Right lobe of liver (tissue), 6 donors: ENCODE measurements at regions of chr18 and their contacts with region 1.

Region 1: DNA sequence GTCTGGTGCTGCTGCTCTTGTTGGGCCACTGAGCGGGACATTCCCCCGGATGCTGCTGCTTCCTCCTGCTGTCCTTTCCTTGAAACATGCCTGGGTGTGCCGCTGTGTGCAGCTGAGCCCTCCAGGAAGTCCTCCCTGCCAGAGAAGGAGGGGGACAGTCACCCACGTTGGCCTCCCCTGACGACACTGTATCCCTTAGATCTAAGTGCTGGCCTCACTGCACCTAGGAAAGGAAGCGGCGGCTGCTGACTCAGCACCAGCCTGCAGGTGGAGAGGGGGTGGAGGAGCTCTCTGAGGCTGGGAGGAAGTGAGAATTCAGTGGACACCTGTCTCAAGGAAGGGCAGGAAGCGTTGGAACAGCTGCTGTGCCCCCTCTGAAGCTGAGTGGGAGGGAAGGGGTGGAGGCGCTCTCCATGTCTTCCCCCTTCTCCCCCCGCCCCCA is 239.8 kb downstream of the HAUS1 start:
- DNase-seq: peak in 2 of 3 donors; percentile 44 to 70
- ATAC-seq: peak; percentile 62 to 71 (median 66)
- H3K4me3 ChIP-seq: peak overlapping the region in 1 of 3 donors; percentile 21
- H3K27ac ChIP-seq: peak overlapping the region in 1 of 3 donors; percentile 59
- H3K4me1 ChIP-seq: peaks cover 0 to 40% (median 12%) of the 10 kb centered on the region in 4 donors
- H3K27me3 ChIP-seq: no peaks in the 10 kb centered on the region
- CTCF ChIP-seq: no peak
- POLR2A ChIP-seq: no peak

Region 2: DNA sequence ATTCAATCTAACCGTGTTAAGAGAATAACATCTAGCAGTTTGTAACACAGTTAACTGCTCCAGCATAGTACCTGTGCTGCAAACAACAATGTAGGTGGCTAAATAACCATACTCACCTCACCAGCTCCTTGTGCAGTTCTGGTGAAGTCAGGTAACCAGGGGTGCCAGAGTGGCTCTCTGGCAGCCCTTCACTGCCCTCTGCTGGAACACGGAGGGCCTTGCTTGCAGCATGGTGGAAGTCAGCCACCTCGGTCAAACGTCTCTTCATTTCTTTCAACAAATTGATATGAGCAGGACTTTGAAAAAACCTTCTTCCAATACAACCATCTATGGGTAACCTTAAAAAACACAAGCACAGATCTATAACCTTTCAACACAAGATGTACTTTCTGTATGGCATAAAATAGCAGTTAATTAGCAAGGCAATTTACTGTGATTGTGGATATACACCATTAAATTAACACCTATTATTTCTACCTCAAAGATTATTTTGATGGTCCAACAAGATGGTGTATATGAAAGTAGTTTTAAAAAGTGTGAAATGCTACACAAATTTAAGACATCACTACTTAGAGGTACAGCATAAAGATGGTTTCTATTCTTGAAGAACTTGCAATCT is 433.4 kb before region 1 on chr18:
- intact Hi-C with region 1: no loop called
- DNase-seq: peak; percentile 54 to 66 (median 62)
- ATAC-seq: peak; percentile 94 to 96 (median 96)
- H3K4me3 ChIP-seq: no peak overlapping the region
- H3K27ac ChIP-seq: no peak overlapping the region
- H3K4me1 ChIP-seq: no peaks in the 10 kb centered on the region
- H3K27me3 ChIP-seq: no peaks in the 10 kb centered on the region
- CTCF ChIP-seq: peak; percentile 59 to 91 (median 83)
- POLR2A ChIP-seq: no peak

Region 3: DNA sequence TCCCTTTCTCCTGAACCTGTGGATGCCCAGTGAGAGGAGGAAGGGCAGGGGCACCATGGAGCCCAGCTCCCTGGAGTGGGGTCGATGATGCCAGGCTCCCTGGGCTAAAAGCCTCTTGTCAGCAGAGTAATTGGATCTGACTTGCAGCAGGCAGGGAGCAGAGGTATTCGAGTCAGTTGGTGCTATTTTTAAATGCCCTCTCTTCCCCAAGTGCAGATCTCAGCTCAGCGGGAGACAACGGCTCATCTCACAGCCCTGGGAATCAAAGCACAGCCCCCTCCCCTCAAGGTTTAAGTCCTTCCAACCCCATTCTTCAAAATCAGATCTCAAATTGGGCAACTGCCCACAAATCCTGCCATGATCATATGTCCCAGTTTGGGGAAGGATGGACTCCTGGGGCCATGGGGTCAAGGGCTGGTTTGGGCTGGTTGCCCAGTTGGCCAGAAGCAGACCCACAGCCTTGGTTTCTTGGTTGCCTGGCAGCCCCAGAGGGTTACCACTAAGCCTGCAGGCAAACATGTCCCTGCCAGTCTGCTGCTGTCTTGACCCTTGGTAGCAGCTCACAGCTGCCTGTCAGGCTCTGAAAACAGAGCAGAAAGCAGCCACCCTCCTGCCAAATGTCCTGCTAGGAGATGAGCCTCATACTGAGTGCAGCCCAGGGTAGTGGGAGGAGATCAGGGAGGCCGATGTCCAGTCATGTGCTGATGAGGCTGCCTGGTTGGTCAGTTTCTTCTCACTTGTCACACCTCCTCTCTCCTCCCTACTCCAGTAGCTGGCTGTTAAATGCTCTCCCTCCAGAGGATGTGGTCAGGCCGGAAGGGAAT is 68.1 kb after region 1 on chr18:
- intact Hi-C with region 1: loop called in 1 of 2 experiments (anchors 10 kb)
- DNase-seq: peak in 2 of 3 donors; percentile 64 to 76
- ATAC-seq: peak; percentile 62 to 78 (median 77)
- H3K4me3 ChIP-seq: no peak overlapping the region
- H3K27ac ChIP-seq: peak overlapping the region in 1 of 3 donors; percentile 1
- H3K4me1 ChIP-seq: peaks cover 0 to 20% (median 8%) of the 10 kb centered on the region in 4 donors
- H3K27me3 ChIP-seq: no peaks in the 10 kb centered on the region
- CTCF ChIP-seq: no peak
- POLR2A ChIP-seq: no peak